A549 (cell line): ENCODE measurements at regions of chr1 and their contacts with region 1.

Region 1: DNA sequence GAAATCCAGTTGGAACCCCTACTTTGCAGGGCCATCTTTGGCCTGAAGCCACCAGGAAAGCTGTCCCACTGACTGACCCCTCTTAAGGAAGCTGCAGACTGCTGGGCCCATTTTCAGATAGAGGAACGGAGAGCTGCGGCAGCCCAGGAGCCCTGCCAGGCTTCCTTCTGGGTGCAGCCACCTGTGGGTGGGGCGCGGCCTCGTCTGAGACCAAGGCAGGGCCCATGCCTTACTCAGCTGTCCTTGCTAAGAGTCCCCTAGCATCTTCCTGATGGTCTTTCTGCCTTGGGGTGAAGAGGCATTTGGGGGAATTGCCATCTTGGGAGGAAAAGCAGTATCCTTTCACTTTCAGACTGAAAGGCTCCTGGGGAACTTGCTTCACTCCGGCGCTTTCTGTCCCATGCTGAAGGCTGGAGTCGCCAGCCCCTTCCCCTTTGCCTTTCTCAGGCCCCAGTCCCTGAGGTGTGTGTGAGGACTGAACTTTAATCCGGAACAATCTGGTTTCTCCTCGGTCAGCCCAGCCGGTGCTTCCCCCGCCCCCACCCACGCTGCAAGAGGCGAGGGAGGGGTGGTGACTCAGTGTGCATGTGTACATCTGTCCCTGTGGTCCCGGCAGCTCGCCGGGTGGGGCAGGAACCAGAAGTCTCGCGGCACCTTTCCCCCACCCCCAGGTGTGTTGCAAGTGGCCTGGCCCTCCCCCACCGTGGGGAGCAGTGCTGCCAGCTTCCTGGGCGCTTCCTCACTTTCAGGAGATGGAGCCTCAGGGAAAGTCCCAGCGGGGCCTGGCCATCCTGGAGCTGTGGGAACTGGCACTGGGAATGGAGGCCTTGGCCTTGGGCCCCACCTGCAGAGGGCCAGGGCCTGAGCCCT is 5.1 kb downstream of the ZC3H12A start:
- DNase-seq: peak; percentile 81 to 86
- ATAC-seq: peak; percentile 17 to 25
- H3K4me3 ChIP-seq: peak overlapping the region; percentile 85
- H3K27ac ChIP-seq: peak overlapping the region; percentile 88 to 100
- H3K4me1 ChIP-seq: peaks cover 58% of the 10 kb centered on the region
- CTCF ChIP-seq: no peak
- EP300 ChIP-seq: peak; percentile 79 to 86; a peak in 3 of 5 replicates
- POLR2A ChIP-seq: no peak
- RAD21 ChIP-seq: no peak; a peak in 1 of 5 replicates

Region 2: DNA sequence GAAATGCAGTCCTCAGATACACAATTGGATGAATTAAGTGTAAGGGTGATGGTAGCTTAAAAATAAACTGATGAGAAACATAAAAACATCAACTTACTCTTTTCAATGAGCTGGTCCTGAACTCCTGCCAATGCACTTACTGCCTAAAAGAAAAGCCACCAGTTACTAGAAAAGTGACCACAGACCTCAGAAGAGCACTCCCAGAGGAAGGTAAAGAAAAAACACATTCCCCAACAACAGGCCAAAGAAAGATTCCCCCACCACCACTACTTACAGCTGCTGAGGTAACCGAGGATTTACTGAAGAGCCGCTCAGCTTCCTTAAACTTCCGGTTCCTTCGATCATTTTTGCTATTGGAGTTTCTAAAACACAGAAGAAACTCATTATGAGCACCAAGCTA is 29.7 kb after region 1 on chr1:
- CTCF ChIA-PET with region 1: interaction called, 19 read pairs
- POLR2A ChIA-PET with region 1: interaction called, 8 read pairs
- DNase-seq: peak in 1 of 2 experiments; percentile 30
- ATAC-seq: peak; percentile 74 to 86; a peak in 4 of 6 replicates
- H3K4me3 ChIP-seq: no peak overlapping the region
- H3K27ac ChIP-seq: no peak overlapping the region
- H3K4me1 ChIP-seq: peaks cover 6% of the 10 kb centered on the region; the same call in 1 of the 3 replicates
- CTCF ChIP-seq: peak; percentile 20; the same call in 1 of the 3 replicates
- EP300 ChIP-seq: no peak
- POLR2A ChIP-seq: no peak
- RAD21 ChIP-seq: no peak